ENCODE measurements at regions of chr5 and their contacts with region 1.

Region 1: DNA sequence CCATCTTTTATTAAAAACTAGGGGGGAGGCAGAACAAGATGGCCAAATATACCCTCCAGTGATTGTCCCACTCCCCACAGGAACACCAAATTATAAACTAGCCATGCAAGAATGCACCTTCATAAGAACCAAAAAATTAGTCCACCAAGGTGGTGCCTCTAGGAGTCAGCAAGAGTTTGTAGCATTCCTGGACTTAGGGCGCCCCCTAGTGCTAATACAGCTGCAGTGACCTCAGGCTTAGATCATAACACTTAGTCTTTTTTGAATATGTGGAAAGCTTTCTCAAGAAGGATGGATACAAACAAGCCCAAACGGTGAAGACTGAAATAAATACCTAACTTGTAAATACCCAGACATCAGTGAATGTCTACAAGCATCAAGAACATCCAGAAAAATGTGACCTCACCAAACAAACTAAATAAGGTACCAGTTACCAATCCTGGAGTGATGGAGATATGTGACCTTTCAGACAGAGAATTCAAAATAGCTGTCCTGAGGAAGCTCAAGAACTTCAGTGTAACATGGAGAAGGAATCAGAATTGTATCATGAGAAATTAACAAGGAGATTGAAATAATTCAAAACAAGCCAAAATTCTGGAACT is 19.3 kb downstream of the PPIP5K2 start:
- DNase-seq: peak; percentile 91
- ATAC-seq: peak; percentile 100
- H3K4me3 ChIP-seq: no peak overlapping the region
- H3K27ac ChIP-seq: no peak overlapping the region
- H3K4me1 ChIP-seq: no peaks in the 10 kb centered on the region
- H3K27me3 ChIP-seq: no peaks in the 10 kb centered on the region
- CTCF ChIP-seq: peak; percentile 100

Region 2: GRCh38 chr5:102536323-102536928 is 602.9 kb before region 1 on chr5:
- CTCF ChIA-PET with region 1: no interaction called
- POLR2A ChIA-PET with region 1: no interaction called
- intact Hi-C with region 1: loop called (anchors 1 kb)
- DNase-seq: peak; percentile 63
- ATAC-seq: peak; percentile 57
- H3K4me3 ChIP-seq: no peak overlapping the region
- H3K27ac ChIP-seq: no peak overlapping the region
- H3K4me1 ChIP-seq: no peaks in the 10 kb centered on the region
- H3K27me3 ChIP-seq: peaks cover 3% of the 10 kb centered on the region
- CTCF ChIP-seq: peak; percentile 79

Region 3: GRCh38 chr5:102778478-102778877 is 360.9 kb before region 1 on chr5:
- CTCF ChIA-PET with region 1: no interaction called
- POLR2A ChIA-PET with region 1: no interaction called
- intact Hi-C with region 1: loop called (anchors 5 kb)
- DNase-seq: peak; percentile 64
- ATAC-seq: peak; percentile 53
- H3K4me3 ChIP-seq: no peak overlapping the region
- H3K27ac ChIP-seq: peak overlapping the region; percentile 3; the same call in 1 of the 2 replicates
- H3K4me1 ChIP-seq: peaks cover 27% of the 10 kb centered on the region
- H3K27me3 ChIP-seq: no peaks in the 10 kb centered on the region
- CTCF ChIP-seq: no peak

Region 4: GRCh38 chr5:103041071-103041676 is 98.2 kb before region 1 on chr5:
- CTCF ChIA-PET with region 1: no interaction called
- POLR2A ChIA-PET with region 1: no interaction called
- intact Hi-C with region 1: loop called (anchors 1 kb)
- DNase-seq: peak; percentile 88
- ATAC-seq: peak; percentile 78
- H3K4me3 ChIP-seq: no peak overlapping the region
- H3K27ac ChIP-seq: no peak overlapping the region
- H3K4me1 ChIP-seq: peaks cover 8% of the 10 kb centered on the region; the same call in 1 of the 2 replicates
- H3K27me3 ChIP-seq: no peaks in the 10 kb centered on the region
- CTCF ChIP-seq: peak; percentile 82

Region 5: DNA sequence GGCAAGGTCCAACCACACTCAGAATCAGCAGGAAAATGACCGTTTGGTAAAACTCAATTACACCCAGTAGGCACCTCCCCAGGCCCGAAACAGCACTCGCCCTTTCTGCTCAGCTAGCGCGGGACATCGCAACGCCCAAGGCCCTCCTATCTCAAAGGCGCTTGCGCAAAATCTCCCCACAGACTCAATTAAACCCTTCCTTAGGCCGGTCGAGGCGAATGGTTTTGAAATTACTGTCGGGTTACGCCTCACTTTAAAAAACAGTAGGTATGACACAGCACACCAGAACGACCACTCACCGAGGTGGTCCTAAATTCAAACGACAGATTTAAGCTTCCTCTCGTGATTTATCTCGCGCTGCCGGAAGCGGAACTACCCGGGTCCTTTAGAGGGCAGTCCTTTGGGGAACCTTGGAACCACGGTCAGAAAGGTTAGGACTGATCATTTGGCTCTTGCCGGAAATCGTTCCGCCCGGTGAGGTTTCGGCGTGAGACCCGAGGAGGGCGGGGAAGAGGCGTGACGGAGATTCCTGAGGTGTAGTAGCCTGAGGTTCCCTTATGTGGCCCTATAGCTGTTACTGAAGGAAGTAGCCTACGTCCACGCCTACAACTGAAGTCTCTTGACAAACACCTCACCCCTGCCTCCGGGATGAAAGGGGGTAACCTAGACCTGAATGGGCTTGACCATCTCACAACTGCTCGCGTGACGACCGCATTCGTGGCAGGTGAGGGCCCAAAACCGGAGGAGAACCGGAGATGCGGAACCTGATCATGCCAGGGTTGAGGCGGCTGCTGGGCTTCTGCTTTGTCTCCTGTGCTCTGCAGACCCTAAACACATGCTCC is 19.4 kb before region 1 on chr5 and contains the starts of genes GIN1 and PPIP5K2:
- CTCF ChIA-PET with region 1: no interaction called
- POLR2A ChIA-PET with region 1: no interaction called
- intact Hi-C with region 1: no loop called
- DNase-seq: peak; percentile 100
- ATAC-seq: peak; percentile 89
- H3K4me3 ChIP-seq: peak within 1 kb of the TSS; percentile 90
- H3K27ac ChIP-seq: peak within 1 kb of the TSS; percentile 92
- H3K4me1 ChIP-seq: peaks cover 32% of the 10 kb centered on the region
- H3K27me3 ChIP-seq: no peaks in the 10 kb centered on the region
- CTCF ChIP-seq: no peak
- total RNA-seq, gene GIN1: 3.9 and 6.2 TPM in 2 replicates
- total RNA-seq, gene PPIP5K2: 40.4 and 52.2 TPM in 2 replicates

Measured in PC-3 (cell line).